Activated CD4-positive, alpha-beta memory T cell treated with anti-CD3 and anti-CD28 coated beads, Interleukin-2, amount 10 ng/mL, durations not matched to agents 7 days and 5 days (primary cell): ENCODE measurements at regions of chr10 and their contacts with region 1.

Region 1: DNA sequence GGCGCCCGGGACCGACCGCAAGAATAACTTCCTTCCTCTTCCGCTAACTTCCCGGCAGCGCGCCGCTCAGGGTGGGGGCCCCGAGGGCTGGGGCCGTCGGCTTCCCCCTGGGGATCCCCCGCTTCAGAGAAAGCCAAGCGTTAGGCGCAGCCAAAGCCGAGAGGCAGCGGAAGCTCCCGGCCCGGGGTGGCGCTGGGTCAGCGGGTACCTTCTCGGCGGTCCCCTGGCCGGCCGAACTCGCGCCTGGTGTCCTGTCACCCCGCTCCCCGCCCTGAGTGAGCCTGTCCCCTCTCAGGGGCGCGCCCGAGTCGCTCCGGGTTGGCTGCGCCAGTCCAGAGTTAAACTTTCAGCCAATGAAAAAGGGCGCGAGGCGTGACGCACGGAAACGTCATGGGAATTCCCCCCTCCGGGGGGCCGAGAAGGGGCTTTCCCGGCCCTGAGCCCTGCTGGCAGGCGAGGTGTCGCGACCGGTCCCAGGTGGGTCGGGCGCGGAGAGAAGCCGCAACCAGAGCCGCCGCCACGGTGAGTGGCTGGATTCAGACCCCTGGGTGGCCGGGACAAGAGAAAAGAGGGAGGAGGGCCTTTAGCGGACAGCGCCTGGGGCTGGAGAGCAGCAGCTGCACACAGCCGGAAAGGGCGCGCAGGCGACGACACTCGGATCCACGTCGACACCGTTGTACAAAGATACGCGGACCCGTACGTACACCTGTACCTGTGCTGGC is 1.3 kb upstream of the NFKB2 start:
- DNase-seq: peak; percentile 98
- H3K4me3 Mint-ChIP-seq: peak overlapping the region; percentile 84
- H3K27ac Mint-ChIP-seq: peak overlapping the region; percentile 93
- H3K4me1 Mint-ChIP-seq: peaks cover 41% of the 10 kb centered on the region
- H3K27me3 Mint-ChIP-seq: no peaks in the 10 kb centered on the region

Region 2: GRCh38 chr10:102358712-102359382 is 35.4 kb before region 1 on chr10:
- CTCF ChIA-PET with region 1: interaction called, 5 read pairs
- POLR2A ChIA-PET with region 1: interaction called, 15 read pairs
- DNase-seq: no peak
- H3K4me3 Mint-ChIP-seq: no peak overlapping the region
- H3K27ac Mint-ChIP-seq: no peak overlapping the region
- H3K4me1 Mint-ChIP-seq: peaks cover 21% of the 10 kb centered on the region
- H3K27me3 Mint-ChIP-seq: no peaks in the 10 kb centered on the region

Region 3: DNA sequence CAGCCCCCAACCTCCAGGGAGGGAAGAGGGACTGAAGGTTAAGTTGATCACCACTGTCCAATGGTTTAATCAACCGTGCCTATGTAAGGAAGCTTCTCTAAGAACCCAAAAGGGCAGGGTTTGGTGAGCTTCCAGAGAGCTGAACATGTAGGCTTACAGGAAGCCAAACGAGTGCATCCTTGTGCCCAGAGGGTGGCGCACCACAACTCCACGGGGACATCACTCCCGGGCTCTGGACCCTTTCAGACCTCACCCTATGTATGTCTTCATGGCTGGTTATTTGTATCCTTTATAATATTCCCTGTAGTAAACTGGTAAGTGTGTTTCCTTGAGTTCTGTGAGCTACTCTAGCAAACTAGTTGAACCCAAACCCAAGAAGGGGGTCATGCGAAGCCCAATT is 10.2 kb before region 1 on chr10:
- CTCF ChIA-PET with region 1: interaction called, 22 read pairs
- POLR2A ChIA-PET with region 1: interaction called, 10 read pairs
- DNase-seq: no peak
- H3K4me3 Mint-ChIP-seq: no peak overlapping the region
- H3K27ac Mint-ChIP-seq: no peak overlapping the region
- H3K4me1 Mint-ChIP-seq: no peaks in the 10 kb centered on the region
- H3K27me3 Mint-ChIP-seq: no peaks in the 10 kb centered on the region

Region 4: DNA sequence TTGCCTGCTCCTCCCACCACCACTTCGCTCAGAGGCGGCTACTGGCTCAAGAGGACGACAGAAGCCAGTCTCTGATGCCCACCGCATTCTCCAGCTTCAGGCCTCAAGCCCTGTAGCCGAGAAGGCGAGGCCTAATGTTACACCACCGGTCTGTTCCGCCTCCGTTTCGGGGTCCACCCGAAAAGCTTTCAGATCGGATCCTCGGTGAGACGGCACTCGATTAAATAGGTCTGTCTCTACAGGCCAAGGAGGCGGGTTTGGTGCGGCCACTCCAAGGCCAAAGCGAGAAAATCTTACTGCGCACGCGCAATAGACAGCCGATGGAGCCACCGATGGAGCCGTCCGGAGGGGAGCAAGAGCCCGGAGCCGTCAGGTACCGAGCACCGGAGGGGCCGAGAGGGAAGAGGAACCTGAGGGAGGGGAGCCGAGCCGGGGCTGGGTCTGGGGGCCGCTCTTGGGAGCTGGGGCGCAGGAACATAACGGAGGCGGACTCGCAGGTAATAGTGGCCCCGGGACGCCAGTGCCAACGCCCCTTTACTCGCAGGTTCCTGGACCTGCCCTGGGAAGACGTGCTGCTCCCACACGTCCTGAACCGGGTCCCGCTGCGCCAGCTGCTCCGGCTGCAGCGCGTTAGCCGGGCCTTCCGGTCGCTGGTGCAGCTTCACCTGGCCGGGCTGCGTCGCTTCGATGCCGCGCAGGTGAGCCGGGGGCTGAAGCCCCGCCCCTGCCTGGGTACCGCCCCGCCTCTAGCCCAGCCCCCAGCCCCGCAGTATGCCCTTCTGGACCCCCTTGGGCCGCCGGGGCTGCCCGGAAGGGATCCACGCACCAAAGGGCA is 26.8 kb after region 1 on chr10 and contains the start of gene FBXL15:
- CTCF ChIA-PET with region 1: interaction called, 25 read pairs
- POLR2A ChIA-PET with region 1: interaction called, 32 read pairs
- DNase-seq: peak; percentile 97
- H3K4me3 Mint-ChIP-seq: peak within 1 kb of the TSS; percentile 87
- H3K27ac Mint-ChIP-seq: peak within 1 kb of the TSS; percentile 90
- H3K4me1 Mint-ChIP-seq: peaks cover 40% of the 10 kb centered on the region
- H3K27me3 Mint-ChIP-seq: peaks cover 18% of the 10 kb centered on the region
- total RNA-seq, gene FBXL15: 13.5 to 14.3 TPM

Region 5: GRCh38 chr10:102450194-102450938 is 56.1 kb after region 1 on chr10:
- CTCF ChIA-PET with region 1: interaction called, 6 read pairs
- POLR2A ChIA-PET with region 1: interaction called, 21 read pairs
- DNase-seq: peak; percentile 92
- H3K4me3 Mint-ChIP-seq: peak overlapping the region; percentile 95
- H3K27ac Mint-ChIP-seq: peak overlapping the region; percentile 92
- H3K4me1 Mint-ChIP-seq: peaks cover 43% of the 10 kb centered on the region
- H3K27me3 Mint-ChIP-seq: no peaks in the 10 kb centered on the region

Region 6: DNA sequence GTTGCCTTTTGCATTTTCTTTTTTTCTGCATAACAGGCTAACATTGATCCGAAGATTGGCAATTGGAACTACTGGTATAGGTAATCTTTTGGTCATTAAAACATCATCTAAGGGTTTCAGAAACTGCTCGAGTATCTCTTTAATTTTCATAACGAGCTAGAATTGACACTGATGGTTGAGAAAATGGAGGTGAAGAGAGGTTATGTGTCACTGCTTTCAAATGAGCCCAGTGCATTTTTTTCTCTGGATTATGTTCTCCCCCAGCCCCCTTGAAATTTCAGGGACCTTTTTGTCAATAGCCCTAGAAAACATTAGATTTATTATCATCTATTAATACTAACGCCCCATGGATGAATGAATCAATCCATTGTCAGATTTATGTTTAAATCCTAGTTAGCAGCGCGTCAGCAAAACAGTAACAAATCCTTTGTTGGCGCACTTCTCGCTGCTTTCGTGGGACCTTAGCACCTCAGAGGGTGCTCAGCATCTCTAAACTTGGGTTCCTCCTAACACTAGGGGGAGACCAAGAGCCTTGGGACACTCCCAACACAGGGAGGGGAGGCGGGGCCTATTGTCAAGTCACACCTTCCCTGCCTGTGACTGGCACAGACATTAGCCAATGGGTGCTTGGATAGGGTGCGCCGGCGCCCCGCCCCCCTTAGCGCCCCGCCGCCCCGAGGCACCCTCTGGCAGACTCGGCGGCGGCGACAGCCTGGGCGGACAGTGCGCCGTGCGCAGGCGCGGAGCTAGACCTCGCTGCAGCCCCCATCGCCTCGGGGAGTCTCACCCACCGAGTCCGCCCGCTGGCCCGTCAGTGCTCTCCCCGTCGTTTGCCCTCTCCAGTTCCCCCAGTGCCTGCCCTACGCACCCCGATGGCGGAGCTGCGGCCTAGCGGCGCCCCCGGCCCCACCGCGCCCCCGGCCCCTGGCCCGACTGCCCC is 109.3 kb after region 1 on chr10 and contains the start of gene SUFU:
- CTCF ChIA-PET with region 1: interaction called, 7 read pairs
- POLR2A ChIA-PET with region 1: interaction called, 23 read pairs
- DNase-seq: peak; percentile 99
- H3K4me3 Mint-ChIP-seq: no peak within 1 kb of the TSS
- H3K27ac Mint-ChIP-seq: peak within 1 kb of the TSS; percentile 73
- H3K4me1 Mint-ChIP-seq: peaks cover 41% of the 10 kb centered on the region
- H3K27me3 Mint-ChIP-seq: no peaks in the 10 kb centered on the region
- total RNA-seq, gene SUFU: 18.0 to 19.6 TPM